ENCODE measurements at regions of chr1 and their contacts with region 1.

Region 1: GRCh38 chr1:182317611-182318161 is 73.9 kb downstream of the GLUL start:
- DNase-seq: peak in 1 of 2 experiments; percentile 80
- H3K4me3 ChIP-seq: no peak overlapping the region
- H3K27ac ChIP-seq: peak overlapping the region; percentile 54
- H3K4me1 ChIP-seq: peaks cover 45% of the 10 kb centered on the region
- H3K27me3 ChIP-seq: no peaks in the 10 kb centered on the region
- CTCF ChIP-seq: no peak

Region 2: DNA sequence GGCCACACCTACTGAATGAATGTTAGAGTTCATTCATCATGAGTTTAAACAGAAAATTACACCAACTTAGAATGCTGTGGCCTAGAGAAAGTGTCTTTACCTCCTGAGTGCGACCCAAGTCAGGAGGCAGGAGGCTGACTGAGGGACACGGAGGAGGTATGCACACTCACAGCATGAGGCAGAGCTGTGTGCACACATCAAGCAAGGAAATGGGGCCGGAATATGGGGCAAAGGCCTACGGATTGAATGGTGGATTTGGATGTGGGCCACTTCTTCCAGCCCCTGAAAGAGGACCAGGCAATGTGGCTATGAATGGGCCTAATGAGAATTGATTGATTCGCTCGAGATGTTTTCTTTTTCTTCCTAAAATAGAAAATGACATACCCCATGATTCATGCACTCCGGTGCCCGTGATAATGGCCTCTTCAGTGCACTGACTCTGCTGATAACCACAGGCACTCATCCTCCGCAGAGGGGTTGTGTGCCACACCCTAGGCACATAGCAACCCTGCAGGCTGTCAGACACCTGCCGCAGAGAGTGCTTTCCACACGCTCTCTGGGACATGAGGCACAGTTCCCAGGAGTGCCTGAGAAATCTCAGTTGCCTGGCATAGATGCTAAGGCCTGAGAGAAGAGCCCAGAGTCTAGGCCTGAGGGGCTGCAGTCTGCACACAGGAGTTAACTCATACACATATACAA is 81.6 kb before region 1 on chr1:
- CTCF ChIA-PET with region 1: interaction called, 12 read pairs
- POLR2A ChIA-PET with region 1: no interaction called
- intact Hi-C with region 1: no loop called
- DNase-seq: peak; percentile 31 to 89
- H3K4me3 ChIP-seq: no peak overlapping the region
- H3K27ac ChIP-seq: peak overlapping the region; percentile 68
- H3K4me1 ChIP-seq: peaks cover 42% of the 10 kb centered on the region
- H3K27me3 ChIP-seq: no peaks in the 10 kb centered on the region
- CTCF ChIP-seq: no peak

Region 3: GRCh38 chr1:182275271-182275670 is 42.4 kb before region 1 on chr1:
- CTCF ChIA-PET with region 1: no interaction called
- POLR2A ChIA-PET with region 1: no interaction called
- intact Hi-C with region 1: no loop called
- DNase-seq: no peak
- H3K4me3 ChIP-seq: no peak overlapping the region
- H3K27ac ChIP-seq: no peak overlapping the region
- H3K4me1 ChIP-seq: no peaks in the 10 kb centered on the region
- H3K27me3 ChIP-seq: no peaks in the 10 kb centered on the region
- CTCF ChIP-seq: no peak

Measured in PC-9 (cell line).